ENCODE measurements at regions of chr3 and their contacts with region 1.

Region 1: DNA sequence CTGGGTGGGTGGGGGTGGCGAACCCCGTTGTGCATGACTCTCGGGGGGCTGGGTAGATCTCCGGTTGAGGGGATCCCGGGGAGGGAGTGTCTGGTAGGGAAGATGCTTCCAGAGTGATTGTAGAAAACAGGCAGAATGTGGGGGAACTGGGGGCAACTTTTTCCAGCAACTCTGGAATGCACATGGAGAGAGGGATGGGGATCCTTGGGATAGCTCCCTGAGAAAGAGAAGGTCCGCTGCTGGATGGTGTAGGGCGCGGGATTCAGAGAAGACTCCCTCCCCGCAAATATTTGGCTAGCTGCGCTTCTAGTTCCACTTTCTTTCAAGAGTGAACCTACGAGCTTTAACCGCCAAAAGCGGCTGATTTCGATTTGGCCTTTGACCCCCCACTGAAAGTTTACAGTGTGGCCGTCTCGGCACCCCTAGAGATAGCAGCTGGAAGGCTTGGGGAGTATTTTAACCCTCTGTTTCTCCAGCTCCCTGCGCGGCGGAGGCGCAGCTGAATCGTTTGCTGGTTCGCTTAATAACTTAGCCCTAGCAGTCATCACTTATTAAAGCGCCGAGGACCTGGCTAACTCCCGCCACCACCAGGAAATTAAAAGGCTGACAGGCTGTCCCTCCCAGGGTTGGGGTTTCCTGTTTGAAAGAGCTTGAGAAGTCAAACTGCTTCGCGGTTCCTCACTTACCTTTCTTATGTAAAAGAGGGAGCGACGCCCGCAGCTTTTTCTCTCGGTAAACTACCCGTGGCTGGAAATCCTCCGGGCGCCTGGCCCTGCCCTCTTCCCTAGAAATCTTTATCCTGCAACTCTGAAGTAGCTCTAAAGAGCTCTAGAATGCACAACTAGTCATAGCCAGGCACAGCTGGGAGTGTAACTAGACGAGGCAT is 1.2 kb downstream of the PHLDB2 start:
- DNase-seq: peak; percentile 87 to 92
- H3K4me3 ChIP-seq: peak overlapping the region; percentile 81 to 84
- H3K27ac ChIP-seq: peak overlapping the region; percentile 98 to 99
- H3K4me1 ChIP-seq: peaks cover 0 to 52% (median 23%) of the 10 kb centered on the region in 4 donors
- H3K27me3 ChIP-seq: no peaks in the 10 kb centered on the region
- CTCF ChIP-seq: peak; percentile 62 to 78

Region 2: GRCh38 chr3:111717601-111718000 is 142.6 kb before region 1 on chr3:
- intact Hi-C with region 1: loop called (anchors 2 kb)
- DNase-seq: peak; percentile 82 to 86
- H3K4me3 ChIP-seq: no peak overlapping the region
- H3K27ac ChIP-seq: peak overlapping the region; percentile 7 to 35
- H3K4me1 ChIP-seq: peaks cover 0 to 28% (median 10%) of the 10 kb centered on the region in 4 donors
- H3K27me3 ChIP-seq: no peaks in the 10 kb centered on the region
- CTCF ChIP-seq: peak; percentile 88 to 95

Region 3: GRCh38 chr3:111737706-111738086 is 122.5 kb before region 1 on chr3:
- intact Hi-C with region 1: loop called (anchors 5 kb)
- DNase-seq: peak; percentile 80 to 83
- H3K4me3 ChIP-seq: no peak overlapping the region
- H3K27ac ChIP-seq: peak overlapping the region; percentile 76
- H3K4me1 ChIP-seq: peaks cover 0 to 57% (median 32%) of the 10 kb centered on the region in 4 donors
- H3K27me3 ChIP-seq: no peaks in the 10 kb centered on the region
- CTCF ChIP-seq: no peak

Region 4: DNA sequence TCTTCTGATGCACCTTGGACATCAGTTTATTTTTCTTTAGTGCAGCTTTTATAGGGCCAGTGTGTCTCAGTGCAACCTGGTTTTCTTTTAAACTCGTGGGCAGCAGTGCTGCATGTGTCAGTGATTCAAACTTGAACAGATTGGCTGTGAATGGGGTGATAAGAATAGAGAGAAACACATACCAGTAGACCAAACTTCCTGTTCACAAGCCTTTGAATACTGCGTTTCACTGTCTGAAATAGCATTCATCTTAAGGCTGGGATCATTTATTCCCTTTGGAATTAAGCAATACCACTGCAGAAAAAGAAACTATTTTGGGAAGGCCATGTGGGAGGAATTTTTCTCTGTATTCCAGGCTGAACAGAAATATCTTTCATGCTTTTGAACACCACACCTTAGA is 50.6 kb after region 1 on chr3:
- intact Hi-C with region 1: loop called (anchors 10 kb)
- DNase-seq: no peak
- H3K4me3 ChIP-seq: no peak overlapping the region
- H3K27ac ChIP-seq: peak overlapping the region; percentile 20 to 59
- H3K4me1 ChIP-seq: peaks cover 0 to 92% (median 35%) of the 10 kb centered on the region in 4 donors
- H3K27me3 ChIP-seq: no peaks in the 10 kb centered on the region
- CTCF ChIP-seq: no peak

Region 5: DNA sequence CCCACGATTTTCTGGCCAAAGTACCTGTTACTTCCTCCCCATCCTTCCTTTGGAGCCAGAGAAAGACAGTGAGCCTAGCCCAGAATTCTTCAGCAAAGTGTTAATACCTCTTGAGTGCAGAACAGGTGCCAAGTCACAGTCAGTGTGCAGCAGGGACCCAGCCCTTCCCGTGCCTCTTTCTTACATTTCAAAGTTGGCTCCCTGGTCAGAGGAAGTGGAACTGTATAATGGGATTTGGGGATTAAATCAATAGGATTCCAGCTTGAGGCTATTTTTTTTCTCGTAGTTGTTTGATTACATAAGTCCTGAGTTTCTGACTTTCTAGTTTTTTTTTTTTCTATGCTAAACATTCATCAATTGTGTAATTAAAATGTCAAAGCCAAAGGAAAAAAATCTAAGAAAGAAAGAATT is 66.1 kb after region 1 on chr3:
- intact Hi-C with region 1: no loop called
- DNase-seq: no peak
- H3K4me3 ChIP-seq: no peak overlapping the region
- H3K27ac ChIP-seq: peak overlapping the region; percentile 4 to 12
- H3K4me1 ChIP-seq: peaks cover 0 to 69% (median 14%) of the 10 kb centered on the region in 4 donors
- H3K27me3 ChIP-seq: no peaks in the 10 kb centered on the region
- CTCF ChIP-seq: no peak

Region 6: DNA sequence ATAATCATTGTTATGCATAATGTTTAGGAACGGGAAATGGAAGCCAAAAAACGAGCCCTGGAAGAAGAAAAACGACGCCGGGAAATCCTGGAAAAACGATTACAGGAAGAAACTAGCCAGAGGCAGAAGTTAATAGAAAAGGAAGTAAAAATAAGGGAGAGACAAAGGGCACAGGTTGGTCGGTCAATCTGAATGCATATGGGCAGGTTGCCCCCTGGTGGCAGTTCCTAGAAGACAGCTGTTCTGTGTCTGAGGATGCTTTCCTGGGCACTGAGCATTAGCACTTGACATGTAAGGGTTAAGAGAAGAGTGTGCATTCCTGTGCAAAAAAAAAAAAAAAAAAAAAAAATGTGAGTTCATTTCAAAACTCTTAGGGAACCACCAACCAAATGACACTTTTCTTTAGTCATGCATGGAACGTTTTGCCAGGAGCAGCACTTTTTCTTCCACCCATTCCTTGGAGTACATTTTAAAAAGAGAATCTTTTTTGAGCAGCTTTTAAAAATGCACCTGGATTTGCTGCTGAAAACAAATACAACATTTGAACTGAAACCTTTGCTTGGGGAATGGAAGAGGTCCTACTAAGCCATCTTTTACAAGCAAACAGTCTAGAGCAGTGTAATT is 107.5 kb after region 1 on chr3:
- intact Hi-C with region 1: loop called (anchors 10 kb)
- DNase-seq: peak; percentile 87 to 91
- H3K4me3 ChIP-seq: no peak overlapping the region
- H3K27ac ChIP-seq: peak overlapping the region; percentile 14 to 56
- H3K4me1 ChIP-seq: peaks cover 0 to 40% (median 12%) of the 10 kb centered on the region in 4 donors
- H3K27me3 ChIP-seq: no peaks in the 10 kb centered on the region
- CTCF ChIP-seq: peak; percentile 85 to 89